CD4-positive, alpha-beta T cell (primary cell): ENCODE measurements at regions of chr18 and their contacts with region 1.

Region 1: DNA sequence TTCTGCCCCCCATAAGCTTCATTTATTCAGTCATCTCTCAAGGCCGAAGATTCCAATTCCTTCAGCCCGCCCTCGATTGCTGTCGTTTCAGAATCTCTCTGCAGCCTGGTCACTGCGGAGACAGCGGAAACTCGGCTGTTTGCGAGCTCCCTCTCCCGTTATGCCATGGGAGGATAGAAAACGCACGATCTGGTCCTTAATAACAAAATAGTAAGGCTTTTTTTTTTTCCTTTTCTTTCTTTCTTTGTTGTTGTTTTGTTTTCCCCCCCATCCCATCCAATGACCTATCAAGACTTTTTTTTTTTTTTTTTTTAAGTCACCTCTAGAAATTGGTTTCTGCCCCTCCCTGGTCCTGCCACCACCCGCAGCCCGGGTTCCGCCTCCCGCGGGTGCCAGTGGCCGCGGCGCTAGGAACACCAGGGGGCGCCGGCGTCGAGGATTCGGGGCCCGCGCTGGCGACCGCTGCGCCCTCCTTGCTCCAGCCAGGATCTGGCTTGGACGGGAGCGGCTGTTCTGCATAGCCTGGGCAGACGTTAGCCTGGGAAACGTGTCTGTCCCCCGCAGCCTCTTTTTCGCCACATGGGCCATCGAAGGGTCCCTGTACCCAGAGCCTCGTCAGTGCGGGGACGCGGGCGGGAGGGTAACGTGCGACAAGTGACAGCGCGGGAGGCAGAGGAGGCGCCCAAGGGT is 10.1 kb downstream of the CPLX4 start:
- DNase-seq: peak; percentile 16 to 78 (median 57)
- ATAC-seq: peak; percentile 73
- H3K4me3 ChIP-seq: peak overlapping the region; percentile 41
- H3K4me3 Mint-ChIP-seq: no peak overlapping the region
- H3K27ac ChIP-seq: no peak overlapping the region
- H3K27ac Mint-ChIP-seq: no peak overlapping the region
- H3K4me1 ChIP-seq: peaks cover 8% of the 10 kb centered on the region
- H3K4me1 Mint-ChIP-seq: no peaks in the 10 kb centered on the region
- H3K27me3 ChIP-seq: peaks cover 19 to 32% of the 10 kb centered on the region in 2 experiments
- H3K27me3 Mint-ChIP-seq: peaks cover 81% of the 10 kb centered on the region
- CTCF ChIP-seq: peak; percentile 88

Region 2: GRCh38 chr18:59379772-59380522 is 71.6 kb after region 1 on chr18:
- CTCF ChIA-PET with region 1: no interaction called
- POLR2A ChIA-PET with region 1: no interaction called
- intact Hi-C with region 1: loop called in 1 of 2 experiments (anchors 5 kb)
- DNase-seq: no peak
- ATAC-seq: no peak
- H3K4me3 ChIP-seq: no peak overlapping the region
- H3K4me3 Mint-ChIP-seq: no peak overlapping the region
- H3K27ac ChIP-seq: no peak overlapping the region
- H3K27ac Mint-ChIP-seq: no peak overlapping the region
- H3K4me1 ChIP-seq: no peaks in the 10 kb centered on the region
- H3K4me1 Mint-ChIP-seq: no peaks in the 10 kb centered on the region
- H3K27me3 ChIP-seq: peaks cover 0 to 9% of the 10 kb centered on the region in 2 experiments
- H3K27me3 Mint-ChIP-seq: peaks cover 39% of the 10 kb centered on the region
- CTCF ChIP-seq: no peak